ENCODE measurements at regions of chr3 and their contacts with region 1.

Region 1: GRCh38 chr3:168828943-168829342 is 733.2 kb upstream of the GOLIM4 start:
- DNase-seq: no peak
- CTCF ChIP-seq: no peak

Region 2: DNA sequence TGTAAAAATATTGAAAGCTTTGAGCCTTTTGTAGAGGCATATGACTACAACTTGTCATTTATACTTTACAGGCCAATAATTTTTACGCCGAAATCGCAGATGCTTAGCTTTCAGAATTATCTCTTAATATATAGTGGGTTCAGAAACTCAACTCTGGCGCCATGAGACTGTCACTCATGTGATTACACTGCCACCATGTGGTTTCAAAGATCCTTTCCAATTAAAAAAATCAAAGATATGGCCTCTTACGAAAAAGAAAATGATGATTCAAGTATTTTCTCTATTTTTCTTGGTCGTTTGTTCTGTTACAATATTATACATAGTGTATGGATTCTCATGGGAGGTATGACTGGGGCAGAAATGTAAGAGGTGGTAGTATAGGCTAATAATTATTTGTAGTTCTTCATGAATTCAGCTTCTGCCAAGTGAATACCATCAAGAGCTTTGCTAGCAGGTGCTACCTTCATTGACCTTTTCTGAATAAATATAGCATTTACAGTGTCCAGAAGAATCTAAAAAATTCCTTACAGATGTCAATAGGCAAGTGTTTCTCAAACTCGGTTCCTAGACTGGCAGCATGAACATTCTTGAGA is 18.4 kb after region 1 on chr3:
- CTCF ChIA-PET with region 1: interaction called, 10 read pairs
- POLR2A ChIA-PET with region 1: no interaction called
- DNase-seq: peak; percentile 14
- CTCF ChIP-seq: peak; percentile 46

Measured in GM10248 (cell line).